HAP-1 (cell line): ENCODE measurements at regions of chr20 and their contacts with region 1.

Region 1: DNA sequence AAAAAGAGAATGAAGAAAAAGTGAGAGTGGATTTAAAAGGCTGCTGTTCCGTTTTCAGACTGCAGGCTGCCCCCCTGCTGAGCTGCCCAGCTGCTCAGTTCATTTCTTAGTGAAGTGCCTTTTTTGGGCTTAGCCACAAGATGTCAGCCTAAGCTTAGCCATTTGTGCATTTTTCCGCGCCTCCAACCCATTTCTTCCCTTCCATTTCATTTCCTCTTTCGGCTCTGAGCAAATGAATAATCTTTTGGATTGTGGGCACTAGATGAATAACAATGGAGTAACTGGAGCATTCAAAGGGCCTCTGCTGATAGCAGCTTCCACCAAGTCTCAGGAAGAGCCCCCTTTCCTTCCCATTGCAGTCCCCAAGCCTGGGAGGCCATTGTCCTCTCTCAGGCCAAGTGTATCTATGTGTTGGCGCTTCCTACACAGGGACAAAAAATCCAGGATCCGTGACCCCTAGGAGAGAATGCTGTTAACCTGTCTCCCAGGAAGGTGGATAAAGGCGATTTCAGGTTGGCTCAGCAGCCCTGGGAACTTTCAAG is 83.5 kb upstream of the SPTLC3 start:
- DNase-seq: peak; percentile 85 to 90
- H3K4me3 ChIP-seq: no peak overlapping the region
- H3K4me1 ChIP-seq: peaks cover 22% of the 10 kb centered on the region
- H3K27me3 ChIP-seq: no peaks in the 10 kb centered on the region

Region 2: GRCh38 chr20:13105864-13106457 is 180.7 kb after region 1 on chr20:
- in situ Hi-C with region 1: loop called (anchors 10 kb)
- DNase-seq: peak in 1 of 2 experiments; percentile 12
- H3K4me3 ChIP-seq: no peak overlapping the region
- H3K4me1 ChIP-seq: no peaks in the 10 kb centered on the region; the same call in 1 of the 2 replicates
- H3K27me3 ChIP-seq: peaks cover 9% of the 10 kb centered on the region; the same call in 1 of the 2 replicates

Region 3: GRCh38 chr20:13784893-13785715 is 859.8 kb after region 1 on chr20 and contains the starts of genes ESF1 and NDUFAF5:
- in situ Hi-C with region 1: loop called (anchors 25 kb)
- DNase-seq: peak; percentile 95
- H3K4me3 ChIP-seq: peak within 1 kb of the TSS; percentile 82
- H3K4me1 ChIP-seq: peaks cover 10% of the 10 kb centered on the region
- H3K27me3 ChIP-seq: no peaks in the 10 kb centered on the region